ENCODE measurements at regions of chr12 and their contacts with region 1.

Region 1: GRCh38 chr12:120971299-120972179 is 6.8 kb upstream of the HNF1A start:
- DNase-seq: peak; percentile 28
- H3K4me3 Mint-ChIP-seq: no peak overlapping the region
- H3K27ac Mint-ChIP-seq: no peak overlapping the region
- H3K4me1 Mint-ChIP-seq: peaks cover 7% of the 10 kb centered on the region
- H3K27me3 Mint-ChIP-seq: peaks cover 1% of the 10 kb centered on the region

Region 2: GRCh38 chr12:120856980-120857379 is 114.6 kb before region 1 on chr12:
- CTCF ChIA-PET with region 1: interaction called, 12 read pairs
- POLR2A ChIA-PET with region 1: no interaction called
- DNase-seq: no peak
- H3K4me3 Mint-ChIP-seq: no peak overlapping the region
- H3K27ac Mint-ChIP-seq: no peak overlapping the region
- H3K4me1 Mint-ChIP-seq: peaks cover 27% of the 10 kb centered on the region
- H3K27me3 Mint-ChIP-seq: no peaks in the 10 kb centered on the region

Region 3: GRCh38 chr12:121227300-121227699 is 255.8 kb after region 1 on chr12:
- CTCF ChIA-PET with region 1: no interaction called
- POLR2A ChIA-PET with region 1: no interaction called
- DNase-seq: no peak
- H3K4me3 Mint-ChIP-seq: no peak overlapping the region
- H3K27ac Mint-ChIP-seq: peak overlapping the region; percentile 75
- H3K4me1 Mint-ChIP-seq: peaks cover 66% of the 10 kb centered on the region
- H3K27me3 Mint-ChIP-seq: no peaks in the 10 kb centered on the region

Measured in activated CD4-positive, alpha-beta memory T cell treated with anti-CD3 and anti-CD28 coated beads, Interleukin-2, amount 10 ng/mL, durations not matched to agents 7 days and 5 days (primary cell).